CD14-positive monocyte (primary cell): ENCODE measurements at regions of chr2 and their contacts with region 1.

Region 1: DNA sequence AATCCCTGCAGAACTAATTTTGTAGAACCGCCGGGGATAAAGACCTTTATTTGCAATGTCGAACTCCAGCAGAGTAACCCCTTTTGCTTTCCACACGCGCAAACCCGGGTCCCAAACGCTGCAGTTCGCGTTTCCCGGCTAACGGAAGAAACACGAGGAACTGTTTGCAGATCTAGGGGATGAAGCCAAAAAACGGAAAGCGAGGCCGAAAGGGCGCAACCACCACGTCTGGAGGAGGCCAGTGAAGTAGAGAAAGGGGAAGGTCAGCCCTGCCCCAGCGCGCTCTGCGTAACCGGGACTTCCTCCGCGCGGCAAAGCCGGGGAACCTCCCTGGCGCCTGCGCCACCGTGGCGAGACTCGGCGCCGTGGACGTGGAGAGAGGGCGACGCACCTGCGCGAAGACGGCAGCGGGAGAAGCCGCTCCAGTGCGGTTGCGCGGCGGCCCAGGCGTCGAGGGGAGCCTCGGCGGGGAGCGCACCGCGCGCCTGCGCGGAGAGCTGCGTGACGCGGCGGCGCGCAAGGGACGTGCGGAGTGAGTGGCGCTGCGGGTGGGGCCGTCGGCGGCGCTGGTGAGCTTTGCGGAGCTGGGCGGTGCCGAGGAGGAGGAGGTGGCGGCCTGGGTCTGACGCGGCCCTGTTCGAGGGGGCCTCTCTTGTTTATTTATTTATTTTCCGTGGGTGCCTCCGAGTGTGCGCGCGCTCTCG is at the start of gene PPP1CB:
- DNase-seq: peak; percentile 94 to 98 (median 97)
- H3K4me3 ChIP-seq: peak within 1 kb of the TSS; percentile 96 to 100 (median 97)
- H3K4me3 Mint-ChIP-seq: peak within 1 kb of the TSS; percentile 91 to 99
- H3K27ac ChIP-seq: peak within 1 kb of the TSS; percentile 94 to 98
- H3K27ac Mint-ChIP-seq: peak within 1 kb of the TSS; percentile 96 to 99 (median 98)
- H3K4me1 ChIP-seq: peaks cover 23 to 34% of the 10 kb centered on the region in 2 donors
- H3K4me1 Mint-ChIP-seq: peaks cover 38% of the 10 kb centered on the region
- H3K27me3 ChIP-seq: no peaks in the 10 kb centered on the region
- H3K27me3 Mint-ChIP-seq: peaks cover 0 to 2% (median 0%) of the 10 kb centered on the region in 3 donors
- CTCF ChIP-seq: no peak
- polyA plus RNA-seq, gene PPP1CB: 25.3 to 142 (median 69.4) TPM

Region 2: GRCh38 chr2:28566521-28567041 is 184.8 kb before region 1 on chr2:
- intact Hi-C with region 1: loop called (anchors 5 kb)
- DNase-seq: peak; percentile 81 to 86 (median 82)
- H3K4me3 ChIP-seq: peak overlapping the region; percentile 81 to 85 (median 84)
- H3K4me3 Mint-ChIP-seq: peak overlapping the region; percentile 92 to 95
- H3K27ac ChIP-seq: peak overlapping the region; percentile 17 to 77
- H3K27ac Mint-ChIP-seq: peak overlapping the region; percentile 84 to 97 (median 94)
- H3K4me1 ChIP-seq: peaks cover 6 to 13% of the 10 kb centered on the region in 2 donors
- H3K4me1 Mint-ChIP-seq: peaks cover 6% of the 10 kb centered on the region
- H3K27me3 ChIP-seq: no peaks in the 10 kb centered on the region
- H3K27me3 Mint-ChIP-seq: peaks cover 0 to 3% (median 2%) of the 10 kb centered on the region in 3 donors
- CTCF ChIP-seq: peak; percentile 100

Region 3: GRCh38 chr2:28594289-28595108 is 156.9 kb before region 1 on chr2:
- intact Hi-C with region 1: loop called (anchors 5 to 10 kb)
- DNase-seq: peak; percentile 82 to 93 (median 89)
- H3K4me3 ChIP-seq: peak overlapping the region in 1 of 3 experiments; percentile 45
- H3K4me3 Mint-ChIP-seq: peak overlapping the region; percentile 60 to 77
- H3K27ac ChIP-seq: peak overlapping the region in 1 of 2 donors; percentile 62
- H3K27ac Mint-ChIP-seq: peak overlapping the region; percentile 71 to 93 (median 87)
- H3K4me1 ChIP-seq: peaks cover 14 to 16% of the 10 kb centered on the region in 2 donors
- H3K4me1 Mint-ChIP-seq: peaks cover 16% of the 10 kb centered on the region
- H3K27me3 ChIP-seq: no peaks in the 10 kb centered on the region
- H3K27me3 Mint-ChIP-seq: peaks cover 0 to 6% (median 2%) of the 10 kb centered on the region in 3 donors
- CTCF ChIP-seq: peak; percentile 91

Region 4: DNA sequence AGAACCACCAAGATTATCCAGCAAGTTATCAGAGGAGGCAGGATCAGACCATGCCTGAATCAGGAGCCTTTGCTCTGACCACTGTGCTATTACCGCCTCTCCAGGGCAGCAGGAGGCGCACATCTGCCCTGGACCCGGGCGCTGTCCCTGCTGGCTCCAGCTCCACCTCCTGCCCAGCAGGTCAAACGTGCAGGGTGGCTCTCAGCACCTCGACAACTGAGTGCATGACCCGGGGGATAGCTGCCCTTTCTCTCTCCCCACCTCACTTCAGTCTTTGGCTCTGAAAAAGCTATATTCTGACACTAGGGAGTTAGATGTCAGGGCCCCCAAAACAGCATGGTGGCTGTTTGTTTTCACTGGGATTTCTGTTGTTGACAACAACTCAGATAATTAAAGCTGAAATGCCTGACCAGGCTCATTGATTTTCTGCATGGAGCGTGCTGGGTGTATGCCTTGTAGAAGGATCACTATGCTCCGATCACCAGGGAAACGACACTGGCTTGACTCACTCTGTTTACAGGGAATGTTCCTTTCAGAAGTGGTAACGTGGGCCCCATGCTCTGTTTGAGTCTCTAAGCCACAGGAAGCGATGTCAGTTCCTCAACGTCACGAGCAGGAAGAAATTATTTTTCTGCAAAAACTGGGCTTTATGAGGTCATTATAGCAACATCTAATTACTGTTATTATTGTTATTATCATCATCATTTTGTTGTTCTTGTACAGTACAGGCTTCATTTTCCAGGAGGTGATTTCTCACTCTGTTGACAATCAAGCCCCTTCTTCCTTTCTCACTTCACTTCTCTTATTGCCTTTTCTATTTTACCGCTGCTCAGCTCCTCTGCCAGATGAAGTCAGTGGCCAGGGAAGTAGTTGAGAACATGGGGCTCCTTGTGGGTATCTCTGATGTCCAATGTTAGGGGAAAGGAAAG is 130.0 kb before region 1 on chr2:
- intact Hi-C with region 1: loop called in 1 of 2 experiments (anchors 5 kb)
- DNase-seq: peak; percentile 91 to 94 (median 93)
- H3K4me3 ChIP-seq: peak overlapping the region in 2 of 3 experiments; percentile 3 to 44
- H3K4me3 Mint-ChIP-seq: peak overlapping the region; percentile 60 to 76
- H3K27ac ChIP-seq: peak overlapping the region; percentile 85 to 96
- H3K27ac Mint-ChIP-seq: peak overlapping the region; percentile 96 to 99 (median 98)
- H3K4me1 ChIP-seq: peaks cover 47 to 50% of the 10 kb centered on the region in 2 donors
- H3K4me1 Mint-ChIP-seq: peaks cover 60% of the 10 kb centered on the region
- H3K27me3 ChIP-seq: no peaks in the 10 kb centered on the region
- H3K27me3 Mint-ChIP-seq: no peaks in the 10 kb centered on the region
- CTCF ChIP-seq: peak; percentile 52

Region 5: DNA sequence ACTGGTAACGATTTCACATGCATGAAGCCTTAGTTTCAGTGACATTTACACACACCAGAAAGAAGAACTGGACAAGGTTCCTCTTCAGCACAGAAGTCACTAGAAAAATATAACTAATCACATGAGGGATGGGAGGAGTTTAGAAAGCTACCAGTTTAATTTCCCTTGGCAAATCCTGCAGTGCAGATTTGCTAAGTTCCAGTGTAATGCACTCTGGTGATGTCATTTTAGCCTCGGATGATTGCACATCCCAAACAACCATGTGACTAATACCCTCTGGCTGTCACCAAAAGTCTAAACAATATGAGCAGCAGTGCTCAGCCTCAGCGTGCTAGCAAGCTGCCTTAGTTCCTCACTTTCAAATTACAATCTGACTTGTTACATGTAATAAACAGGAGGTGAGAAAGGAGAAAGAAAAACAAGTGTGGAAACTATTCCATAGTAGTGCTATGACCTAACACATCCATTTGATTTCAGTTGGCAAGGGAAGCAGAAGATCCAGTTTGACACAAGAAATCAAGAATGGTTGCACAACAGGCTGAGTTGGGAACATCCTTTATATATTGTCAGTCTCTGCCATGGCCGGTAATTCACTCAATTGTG is 35.0 kb before region 1 on chr2:
- intact Hi-C with region 1: loop called (anchors 2 kb)
- DNase-seq: peak; percentile 97 to 99 (median 98)
- H3K4me3 ChIP-seq: peak overlapping the region in 1 of 3 experiments; percentile 50
- H3K4me3 Mint-ChIP-seq: peak overlapping the region in 1 of 2 donors; percentile 75
- H3K27ac ChIP-seq: peak overlapping the region; percentile 95 to 99
- H3K27ac Mint-ChIP-seq: peak overlapping the region; percentile 99 to 100 (median 99)
- H3K4me1 ChIP-seq: peaks cover 53 to 54% of the 10 kb centered on the region in 2 donors
- H3K4me1 Mint-ChIP-seq: peaks cover 49% of the 10 kb centered on the region
- H3K27me3 ChIP-seq: no peaks in the 10 kb centered on the region
- H3K27me3 Mint-ChIP-seq: peaks cover 0 to 4% (median 1%) of the 10 kb centered on the region in 3 donors
- CTCF ChIP-seq: no peak